T-cell (primary cell): ENCODE measurements at regions of chr3 and their contacts with region 1.

Region 1: GRCh38 chr3:14178247-14179113 is at the starts of genes LSM3 and XPC:
- DNase-seq: peak; percentile 93 to 99 (median 97)
- ATAC-seq: peak; percentile 89 to 98 (median 94)
- H3K4me3 ChIP-seq: peak within 1 kb of the TSS; percentile 83 to 84
- H3K4me3 Mint-ChIP-seq: peak within 1 kb of the TSS; percentile 91 to 100 (median 98)
- H3K27ac ChIP-seq: peak within 1 kb of the TSS; percentile 94
- H3K27ac Mint-ChIP-seq: peak within 1 kb of the TSS; percentile 98 to 100
- H3K4me1 ChIP-seq: peaks cover 36 to 42% of the 10 kb centered on the region in 2 experiments
- H3K4me1 Mint-ChIP-seq: peaks cover 70 to 80% (median 75%) of the 10 kb centered on the region in 3 donors
- H3K27me3 ChIP-seq: no peaks in the 10 kb centered on the region
- H3K27me3 Mint-ChIP-seq: no peaks in the 10 kb centered on the region
- total RNA-seq, gene LSM3: 6.7 to 8.4 (median 7.3) TPM
- total RNA-seq, gene XPC: 67.8 to 90.7 (median 76.9) TPM

Region 2: GRCh38 chr3:13895155-13896105 is 283.1 kb before region 1 on chr3:
- CTCF ChIA-PET with region 1: interaction called in 1 of 2 experiments, 18 read pairs
- POLR2A ChIA-PET with region 1: interaction called in 1 of 2 experiments, 3 read pairs
- DNase-seq: peak; percentile 85 to 96 (median 93)
- ATAC-seq: peak; percentile 93 to 96 (median 94)
- H3K4me3 ChIP-seq: peak overlapping the region; percentile 71 to 87
- H3K4me3 Mint-ChIP-seq: peak overlapping the region; percentile 88 to 92 (median 88)
- H3K27ac ChIP-seq: peak overlapping the region; percentile 70
- H3K27ac Mint-ChIP-seq: peak overlapping the region; percentile 91
- H3K4me1 ChIP-seq: peaks cover 12 to 41% of the 10 kb centered on the region in 2 experiments
- H3K4me1 Mint-ChIP-seq: peaks cover 26 to 39% (median 32%) of the 10 kb centered on the region in 3 donors
- H3K27me3 ChIP-seq: no peaks in the 10 kb centered on the region
- H3K27me3 Mint-ChIP-seq: peaks cover 0 to 2% of the 10 kb centered on the region in 2 donors

Region 3: GRCh38 chr3:14124615-14125190 is 53.8 kb before region 1 on chr3 and contains the starts of genes CHCHD4 and TMEM43:
- CTCF ChIA-PET with region 1: interaction called, 3 to 9 read pairs
- POLR2A ChIA-PET with region 1: interaction called, 13 to 43 read pairs
- DNase-seq: peak; percentile 88 to 100 (median 98)
- ATAC-seq: peak; percentile 91 to 93 (median 92)
- H3K4me3 ChIP-seq: peak within 1 kb of the TSS; percentile 97 to 98
- H3K4me3 Mint-ChIP-seq: peak within 1 kb of the TSS; percentile 93 to 95 (median 94)
- H3K27ac ChIP-seq: peak within 1 kb of the TSS; percentile 86
- H3K27ac Mint-ChIP-seq: peak within 1 kb of the TSS; percentile 90 to 92
- H3K4me1 ChIP-seq: peaks cover 23 to 41% of the 10 kb centered on the region in 2 experiments
- H3K4me1 Mint-ChIP-seq: peaks cover 61 to 73% (median 63%) of the 10 kb centered on the region in 3 donors
- H3K27me3 ChIP-seq: no peaks in the 10 kb centered on the region
- H3K27me3 Mint-ChIP-seq: no peaks in the 10 kb centered on the region
- total RNA-seq, gene CHCHD4: 2.7 to 8.4 (median 8.3) TPM
- total RNA-seq, gene TMEM43: 36.9 to 76.3 (median 63.6) TPM

Region 4: GRCh38 chr3:14144423-14145075 is 33.9 kb before region 1 on chr3:
- CTCF ChIA-PET with region 1: interaction called in 1 of 2 experiments, 8 read pairs
- POLR2A ChIA-PET with region 1: interaction called, 8 to 78 read pairs
- DNase-seq: peak in 34 of 35 experiments; percentile 35 to 95 (median 66)
- ATAC-seq: peak; percentile 72 to 87 (median 80)
- H3K4me3 ChIP-seq: no peak overlapping the region
- H3K4me3 Mint-ChIP-seq: peak overlapping the region; percentile 65 to 76 (median 70)
- H3K27ac ChIP-seq: peak overlapping the region; percentile 99
- H3K27ac Mint-ChIP-seq: peak overlapping the region; percentile 98 to 100
- H3K4me1 ChIP-seq: peaks cover 22 to 57% of the 10 kb centered on the region in 2 experiments
- H3K4me1 Mint-ChIP-seq: peaks cover 48 to 69% (median 65%) of the 10 kb centered on the region in 3 donors
- H3K27me3 ChIP-seq: no peaks in the 10 kb centered on the region
- H3K27me3 Mint-ChIP-seq: no peaks in the 10 kb centered on the region

Region 5: GRCh38 chr3:14431892-14432834 is 253.7 kb after region 1 on chr3:
- CTCF ChIA-PET with region 1: interaction called in 1 of 2 experiments, 6 read pairs
- POLR2A ChIA-PET with region 1: interaction called in 1 of 2 experiments, 10 read pairs
- DNase-seq: peak; percentile 75 to 96 (median 93)
- ATAC-seq: peak; percentile 89 to 92 (median 90)
- H3K4me3 ChIP-seq: peak overlapping the region; percentile 1 to 37
- H3K4me3 Mint-ChIP-seq: peak overlapping the region; percentile 67 to 77 (median 76)
- H3K27ac ChIP-seq: peak overlapping the region; percentile 97
- H3K27ac Mint-ChIP-seq: peak overlapping the region; percentile 99
- H3K4me1 ChIP-seq: peaks cover 22 to 93% of the 10 kb centered on the region in 2 experiments
- H3K4me1 Mint-ChIP-seq: peaks cover 66 to 95% (median 91%) of the 10 kb centered on the region in 3 donors
- H3K27me3 ChIP-seq: no peaks in the 10 kb centered on the region
- H3K27me3 Mint-ChIP-seq: no peaks in the 10 kb centered on the region

Region 6: GRCh38 chr3:14651440-14652251 is 473.2 kb after region 1 on chr3 and contains the start of gene CCDC174:
- CTCF ChIA-PET with region 1: interaction called in 1 of 2 experiments, 7 read pairs
- POLR2A ChIA-PET with region 1: interaction called in 1 of 2 experiments, 11 read pairs
- DNase-seq: peak; percentile 87 to 100 (median 94)
- ATAC-seq: peak; percentile 96 to 99 (median 98)
- H3K4me3 ChIP-seq: peak within 1 kb of the TSS; percentile 68 to 83
- H3K4me3 Mint-ChIP-seq: peak within 1 kb of the TSS; percentile 95 to 98 (median 97)
- H3K27ac ChIP-seq: peak within 1 kb of the TSS; percentile 98
- H3K27ac Mint-ChIP-seq: peak within 1 kb of the TSS; percentile 94 to 98
- H3K4me1 ChIP-seq: peaks cover 15 to 21% of the 10 kb centered on the region in 2 experiments
- H3K4me1 Mint-ChIP-seq: peaks cover 56 to 66% (median 60%) of the 10 kb centered on the region in 3 donors
- H3K27me3 ChIP-seq: no peaks in the 10 kb centered on the region
- H3K27me3 Mint-ChIP-seq: no peaks in the 10 kb centered on the region
- total RNA-seq, gene CCDC174: 36.1 to 48.9 (median 40.6) TPM